ENCODE measurements at regions of chr9 and their contacts with region 1.

Region 1: DNA sequence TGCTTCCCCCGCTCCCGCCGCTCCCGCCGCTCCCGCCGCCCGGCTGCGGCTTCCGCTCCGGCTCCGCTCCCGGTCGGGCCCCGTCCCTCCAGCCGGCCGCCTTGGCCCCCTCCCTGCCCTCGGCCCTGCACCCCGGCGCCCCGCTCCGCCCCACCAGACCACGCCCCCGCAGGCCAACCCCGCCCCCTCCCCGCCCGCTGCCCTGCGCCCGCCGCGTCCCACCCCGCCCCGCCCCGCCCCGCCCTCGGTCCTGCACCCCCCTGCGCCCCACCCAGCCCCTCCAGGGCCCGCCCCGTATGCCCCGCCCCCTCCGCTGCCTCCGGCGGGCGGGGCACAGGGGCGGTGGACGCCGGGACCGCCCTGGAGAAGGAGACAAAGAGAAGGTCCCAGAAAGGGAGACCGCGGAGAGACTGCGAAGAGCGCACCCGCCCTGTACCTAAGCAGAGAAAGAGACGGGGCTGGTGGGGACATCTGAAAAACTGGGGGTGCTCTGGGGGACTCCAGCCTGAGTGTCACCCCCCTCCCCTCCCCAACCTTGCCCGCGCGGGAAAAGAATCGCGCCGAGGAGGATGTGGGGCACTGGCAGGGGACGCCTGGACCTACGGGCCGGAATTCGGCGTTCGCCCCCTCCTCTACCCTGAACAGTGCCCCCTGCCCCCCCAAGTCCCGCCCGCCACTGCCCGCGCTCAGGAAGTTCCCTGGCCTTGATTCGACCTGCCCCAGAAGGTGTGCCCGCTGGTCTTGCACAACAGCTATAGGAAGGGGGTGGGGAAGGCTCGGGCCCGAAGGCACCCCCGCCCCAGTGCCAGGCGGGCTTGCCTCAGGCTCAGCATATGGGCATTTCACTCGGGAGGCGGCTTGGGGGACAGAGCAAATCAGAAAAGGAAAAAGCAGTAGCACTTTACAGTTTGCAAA is 42.8 kb upstream of the STXBP1 start:
- DNase-seq: peak; percentile 72
- ATAC-seq: peak; percentile 81
- H3K4me3 ChIP-seq: peak overlapping the region; percentile 92
- H3K27ac ChIP-seq: peak overlapping the region; percentile 100
- H3K4me1 ChIP-seq: peaks cover 39% of the 10 kb centered on the region
- H3K27me3 ChIP-seq: no peaks in the 10 kb centered on the region
- CTCF ChIP-seq: no peak
- POLR2A ChIP-seq: peak; percentile 78
- RAD21 ChIP-seq: no peak

Region 2: GRCh38 chr9:126791406-126792151 is 777.6 kb before region 1 on chr9:
- CTCF ChIA-PET with region 1: no interaction called
- POLR2A ChIA-PET with region 1: no interaction called
- dilution Hi-C with region 1: no loop called
- in situ Hi-C with region 1: no loop called
- intact Hi-C with region 1: no loop called
- DNase-seq: peak; percentile 76
- ATAC-seq: peak; percentile 76
- H3K4me3 ChIP-seq: no peak overlapping the region
- H3K27ac ChIP-seq: peak overlapping the region; percentile 74
- H3K4me1 ChIP-seq: peaks cover 12% of the 10 kb centered on the region
- H3K27me3 ChIP-seq: peaks cover 6% of the 10 kb centered on the region
- CTCF ChIP-seq: no peak
- POLR2A ChIP-seq: no peak
- RAD21 ChIP-seq: no peak

Region 3: DNA sequence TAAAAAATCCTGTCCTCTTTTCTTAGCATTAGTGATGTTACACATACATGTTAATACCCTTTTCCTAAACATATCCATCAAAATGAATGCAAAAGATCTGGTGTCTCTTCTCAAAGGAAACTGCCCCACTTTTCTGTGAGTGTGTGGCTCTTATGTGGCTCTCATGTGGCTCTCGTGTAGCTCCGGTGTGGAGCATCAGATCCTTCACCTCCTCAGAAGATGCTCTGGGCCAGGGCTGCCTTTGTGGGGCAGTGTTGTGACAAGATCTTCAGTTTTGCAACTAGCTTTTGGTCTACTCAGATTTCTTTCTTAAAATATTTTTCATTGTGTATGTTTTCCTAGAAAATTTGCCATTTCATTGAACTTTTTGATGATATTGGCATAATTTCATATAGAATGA is 285.3 kb before region 1 on chr9:
- CTCF ChIA-PET with region 1: no interaction called
- POLR2A ChIA-PET with region 1: no interaction called
- dilution Hi-C with region 1: no loop called
- in situ Hi-C with region 1: no loop called
- intact Hi-C with region 1: no loop called
- DNase-seq: peak; percentile 51
- ATAC-seq: peak; percentile 80
- H3K4me3 ChIP-seq: no peak overlapping the region
- H3K27ac ChIP-seq: no peak overlapping the region
- H3K4me1 ChIP-seq: peaks cover 2% of the 10 kb centered on the region; the same call in 1 of the 2 replicates
- H3K27me3 ChIP-seq: no peaks in the 10 kb centered on the region; the same call in 1 of the 2 replicates
- CTCF ChIP-seq: peak; percentile 48
- POLR2A ChIP-seq: no peak
- RAD21 ChIP-seq: peak; percentile 44

Region 4: GRCh38 chr9:127503947-127504782 is 65.1 kb before region 1 on chr9:
- CTCF ChIA-PET with region 1: no interaction called
- POLR2A ChIA-PET with region 1: no interaction called
- dilution Hi-C with region 1: no loop called
- in situ Hi-C with region 1: no loop called
- intact Hi-C with region 1: loop called (anchors 5 kb)
- DNase-seq: peak; percentile 82
- ATAC-seq: peak; percentile 72
- H3K4me3 ChIP-seq: no peak overlapping the region
- H3K27ac ChIP-seq: peak overlapping the region; percentile 47
- H3K4me1 ChIP-seq: peaks cover 7% of the 10 kb centered on the region; the same call in 1 of the 2 replicates
- H3K27me3 ChIP-seq: no peaks in the 10 kb centered on the region
- CTCF ChIP-seq: peak; percentile 85
- POLR2A ChIP-seq: 0 out of 2 replicates have a peak, but pooled peaks have one; percentile 47
- RAD21 ChIP-seq: peak; percentile 86